ENCODE measurements at regions of chr4 and their contacts with region 1.

Region 1: GRCh38 chr4:65696436-65696835 is 26.1 kb upstream of the EPHA5 start:
- DNase-seq: no peak
- H3K4me3 ChIP-seq: no peak overlapping the region
- H3K27ac ChIP-seq: peak overlapping the region; percentile 68
- H3K4me1 ChIP-seq: peaks cover 41% of the 10 kb centered on the region
- H3K27me3 ChIP-seq: no peaks in the 10 kb centered on the region
- CTCF ChIP-seq: no peak

Region 2: GRCh38 chr4:65580551-65580950 is 115.9 kb before region 1 on chr4:
- CTCF ChIA-PET with region 1: no interaction called
- POLR2A ChIA-PET with region 1: no interaction called
- intact Hi-C with region 1: loop called (anchors 5 kb)
- DNase-seq: peak; percentile 40
- H3K4me3 ChIP-seq: no peak overlapping the region
- H3K27ac ChIP-seq: no peak overlapping the region
- H3K4me1 ChIP-seq: peaks cover 16% of the 10 kb centered on the region
- H3K27me3 ChIP-seq: no peaks in the 10 kb centered on the region
- CTCF ChIP-seq: no peak; the same call in 1 of the 2 replicates

Region 3: GRCh38 chr4:66169341-66169740 is 472.9 kb after region 1 on chr4:
- CTCF ChIA-PET with region 1: no interaction called
- POLR2A ChIA-PET with region 1: no interaction called
- intact Hi-C with region 1: loop called (anchors 5 kb)
- DNase-seq: peak; percentile 46
- H3K4me3 ChIP-seq: no peak overlapping the region
- H3K27ac ChIP-seq: no peak overlapping the region
- H3K4me1 ChIP-seq: peaks cover 5% of the 10 kb centered on the region
- H3K27me3 ChIP-seq: no peaks in the 10 kb centered on the region
- CTCF ChIP-seq: peak; percentile 44